ENCODE measurements at regions of chr5 and their contacts with region 1.

Region 1: GRCh38 chr5:89435347-89435746 is 552.4 kb upstream of the MEF2C start:
- DNase-seq: no peak
- ATAC-seq: peak; percentile 85
- H3K4me3 Mint-ChIP-seq: peak overlapping the region; percentile 52
- H3K27ac Mint-ChIP-seq: peak overlapping the region; percentile 86
- H3K4me1 Mint-ChIP-seq: peaks cover 73% of the 10 kb centered on the region
- H3K27me3 Mint-ChIP-seq: no peaks in the 10 kb centered on the region
- CTCF ChIP-seq: no peak

Region 2: DNA sequence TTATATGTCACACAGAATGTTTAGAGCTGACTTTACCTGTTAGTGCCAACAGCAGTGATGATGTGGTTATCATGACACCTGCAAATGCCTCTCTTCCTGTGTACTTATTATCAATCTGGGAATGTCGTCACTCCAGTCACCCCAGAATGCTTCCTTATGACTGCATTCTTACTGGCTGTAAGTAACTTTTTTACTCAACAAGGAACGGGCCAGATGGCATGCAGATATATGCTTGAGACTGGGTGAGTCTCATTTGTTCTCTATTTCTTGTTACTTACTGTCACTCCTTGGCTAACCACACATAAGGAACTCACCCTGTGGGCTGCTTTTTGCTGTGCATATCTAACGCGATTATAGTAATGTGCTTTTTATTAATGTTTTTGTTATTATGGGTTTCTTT is 166.9 kb before region 1 on chr5:
- CTCF ChIA-PET with region 1: no interaction called
- POLR2A ChIA-PET with region 1: interaction called, 7 read pairs
- intact Hi-C with region 1: loop called (anchors 1 kb)
- DNase-seq: no peak
- ATAC-seq: peak; percentile 27
- H3K4me3 Mint-ChIP-seq: peak overlapping the region; percentile 50
- H3K27ac Mint-ChIP-seq: peak overlapping the region; percentile 92
- H3K4me1 Mint-ChIP-seq: peaks cover 78% of the 10 kb centered on the region
- H3K27me3 Mint-ChIP-seq: no peaks in the 10 kb centered on the region
- CTCF ChIP-seq: no peak

Region 3: DNA sequence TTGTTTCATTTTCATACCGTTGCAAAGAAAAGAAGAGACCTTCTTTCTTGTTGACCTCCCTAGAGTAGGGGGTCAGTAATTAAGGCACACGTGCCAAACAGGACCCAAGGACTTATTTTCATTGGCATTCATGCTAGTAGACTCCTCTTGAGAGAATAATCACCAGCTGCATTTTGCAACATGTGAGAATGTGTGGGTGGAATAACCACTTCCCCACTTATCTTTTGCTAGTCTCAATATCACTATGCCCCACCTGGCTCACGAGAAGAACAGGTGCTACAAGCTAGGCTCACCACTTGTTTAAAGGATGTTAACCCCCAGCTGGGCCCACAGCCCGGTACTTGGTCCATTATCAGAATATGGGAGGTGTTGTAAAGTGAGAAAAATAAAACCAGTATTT is 91.7 kb before region 1 on chr5:
- CTCF ChIA-PET with region 1: interaction called, 5 read pairs
- POLR2A ChIA-PET with region 1: interaction called, 20 read pairs
- intact Hi-C with region 1: loop called (anchors 1 kb)
- DNase-seq: peak; percentile 29
- ATAC-seq: peak; percentile 79
- H3K4me3 Mint-ChIP-seq: peak overlapping the region; percentile 42
- H3K27ac Mint-ChIP-seq: peak overlapping the region; percentile 80
- H3K4me1 Mint-ChIP-seq: peaks cover 49% of the 10 kb centered on the region
- H3K27me3 Mint-ChIP-seq: no peaks in the 10 kb centered on the region
- CTCF ChIP-seq: no peak

Region 4: DNA sequence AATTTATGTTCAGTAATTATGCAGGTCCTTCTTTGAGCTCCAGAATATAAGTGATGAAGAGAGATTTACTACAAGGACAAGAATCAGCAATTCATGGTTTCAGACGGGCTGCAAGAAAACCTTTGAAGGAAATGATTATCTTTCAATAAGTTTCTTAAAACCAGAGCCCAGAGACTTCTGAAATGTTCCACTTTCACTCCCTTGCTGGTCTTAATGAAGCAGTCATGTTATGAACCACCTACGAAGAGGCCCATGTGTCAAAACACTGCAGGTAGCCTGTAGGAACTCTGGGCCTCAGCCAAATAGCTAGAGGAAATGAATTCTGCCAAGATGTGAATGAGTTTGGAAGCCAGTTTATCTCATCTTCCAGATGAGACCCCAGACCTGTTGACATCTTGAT is 46.5 kb before region 1 on chr5:
- CTCF ChIA-PET with region 1: no interaction called
- POLR2A ChIA-PET with region 1: no interaction called
- intact Hi-C with region 1: loop called (anchors 2 kb)
- DNase-seq: no peak
- ATAC-seq: no peak
- H3K4me3 Mint-ChIP-seq: no peak overlapping the region
- H3K27ac Mint-ChIP-seq: no peak overlapping the region
- H3K4me1 Mint-ChIP-seq: peaks cover 22% of the 10 kb centered on the region
- H3K27me3 Mint-ChIP-seq: no peaks in the 10 kb centered on the region
- CTCF ChIP-seq: no peak

Region 5: GRCh38 chr5:89396278-89396954 is 38.9 kb before region 1 on chr5:
- CTCF ChIA-PET with region 1: no interaction called
- POLR2A ChIA-PET with region 1: interaction called, 3 read pairs
- intact Hi-C with region 1: loop called (anchors 5 kb)
- DNase-seq: no peak
- ATAC-seq: peak; percentile 59
- H3K4me3 Mint-ChIP-seq: peak overlapping the region; percentile 60
- H3K27ac Mint-ChIP-seq: peak overlapping the region; percentile 88
- H3K4me1 Mint-ChIP-seq: peaks cover 61% of the 10 kb centered on the region
- H3K27me3 Mint-ChIP-seq: no peaks in the 10 kb centered on the region
- CTCF ChIP-seq: no peak

Region 6: GRCh38 chr5:89421035-89421434 is 14.3 kb before region 1 on chr5:
- CTCF ChIA-PET with region 1: interaction called, 4 read pairs
- POLR2A ChIA-PET with region 1: interaction called, 6 read pairs
- intact Hi-C with region 1: loop called (anchors 1 kb)
- DNase-seq: no peak
- ATAC-seq: peak; percentile 88
- H3K4me3 Mint-ChIP-seq: peak overlapping the region; percentile 33
- H3K27ac Mint-ChIP-seq: peak overlapping the region; percentile 60
- H3K4me1 Mint-ChIP-seq: peaks cover 44% of the 10 kb centered on the region
- H3K27me3 Mint-ChIP-seq: no peaks in the 10 kb centered on the region
- CTCF ChIP-seq: no peak

Measured in activated B cell treated with CpG ODN at 0.5 μM for 24 hours (primary cell).